ENCODE measurements at regions of chr7 and their contacts with region 1.

Region 1: GRCh38 chr7:27834179-27834921 is 94.4 kb downstream of the TAX1BP1 start:
- DNase-seq: no peak
- H3K4me3 ChIP-seq: no peak overlapping the region
- H3K27me3 ChIP-seq: no peaks in the 10 kb centered on the region
- CTCF ChIP-seq: no peak

Region 2: GRCh38 chr7:27581906-27582305 is 252.4 kb before region 1 on chr7:
- CTCF ChIA-PET with region 1: no interaction called
- POLR2A ChIA-PET with region 1: interaction called, 16 read pairs
- DNase-seq: no peak
- H3K4me3 ChIP-seq: no peak overlapping the region
- H3K27me3 ChIP-seq: no peaks in the 10 kb centered on the region
- CTCF ChIP-seq: no peak

Region 3: DNA sequence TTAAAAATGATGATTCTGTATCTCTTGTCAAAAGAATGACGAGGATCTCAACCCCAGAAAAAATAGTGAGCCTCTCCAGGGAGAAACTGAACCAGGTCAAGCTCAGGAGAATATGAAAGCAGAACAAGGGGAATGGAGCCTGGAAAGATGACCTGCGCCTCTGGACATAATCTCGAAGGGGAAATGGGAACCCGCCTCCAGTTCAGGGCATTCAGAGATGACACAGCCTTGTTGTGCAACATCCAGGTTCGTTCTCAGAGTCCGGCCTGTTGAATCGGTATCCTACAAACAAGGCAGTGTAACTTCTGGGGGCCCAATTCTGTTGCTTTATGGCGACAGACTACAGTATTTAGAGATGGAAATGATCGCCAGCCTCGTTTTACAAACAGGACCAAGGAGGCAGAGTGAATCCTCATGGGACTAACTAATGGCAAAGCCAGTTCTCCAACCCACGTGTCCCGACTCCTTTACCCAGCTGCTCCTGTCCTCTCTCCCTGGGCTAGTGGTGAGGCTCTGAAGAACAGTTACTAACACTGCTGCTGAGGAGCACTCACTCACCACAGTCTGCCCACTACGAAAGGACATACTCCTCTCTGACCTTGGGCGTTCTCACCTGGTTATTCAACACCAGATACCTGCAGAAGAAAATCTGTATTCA is 278.7 kb after region 1 on chr7:
- CTCF ChIA-PET with region 1: no interaction called
- POLR2A ChIA-PET with region 1: no interaction called
- DNase-seq: no peak
- H3K4me3 ChIP-seq: no peak overlapping the region
- H3K27me3 ChIP-seq: no peaks in the 10 kb centered on the region
- CTCF ChIP-seq: no peak

Measured in BJ (cell line).